ENCODE measurements at regions of chr10 and their contacts with region 1.

Region 1: DNA sequence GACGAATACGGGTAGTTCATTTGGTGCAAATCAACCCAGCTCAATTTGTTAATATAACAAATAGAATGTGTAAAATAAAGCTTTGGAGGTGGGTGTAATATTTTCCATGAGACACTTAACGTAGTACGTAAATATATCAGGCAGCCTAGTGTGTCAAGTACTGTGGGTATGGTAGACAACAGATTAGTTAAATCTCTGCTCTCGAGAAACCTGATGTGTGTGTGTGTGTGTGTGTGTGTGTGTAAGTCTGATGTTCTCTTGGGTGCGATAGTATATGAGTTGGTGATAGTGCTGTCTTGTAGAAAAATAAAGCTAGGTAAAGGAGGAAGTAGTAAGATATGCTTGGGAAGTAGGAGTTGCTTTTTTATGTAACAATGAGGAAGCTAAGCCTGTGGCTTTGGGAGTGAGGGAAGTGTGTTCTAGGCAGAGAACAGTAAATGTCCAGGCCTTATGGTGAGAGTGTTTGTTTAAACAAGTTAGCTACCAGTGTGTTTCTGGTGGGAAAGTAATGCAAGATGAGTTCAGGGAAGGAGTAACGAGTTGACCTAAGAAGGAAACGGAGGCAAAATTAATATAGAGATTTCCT is 26.1 kb downstream of the WAC start:
- DNase-seq: no peak
- H3K4me3 ChIP-seq: no peak overlapping the region
- H3K27ac ChIP-seq: no peak overlapping the region
- H3K4me1 ChIP-seq: peaks cover 0 to 18% (median 10%) of the 10 kb centered on the region in 4 experiments; a peak in 4 of 7 replicates
- H3K27me3 ChIP-seq: no peaks in the 10 kb centered on the region
- CTCF ChIP-seq: no peak
- EP300 ChIP-seq: no peak
- POLR2A ChIP-seq: no peak
- RAD21 ChIP-seq: no peak

Region 2: DNA sequence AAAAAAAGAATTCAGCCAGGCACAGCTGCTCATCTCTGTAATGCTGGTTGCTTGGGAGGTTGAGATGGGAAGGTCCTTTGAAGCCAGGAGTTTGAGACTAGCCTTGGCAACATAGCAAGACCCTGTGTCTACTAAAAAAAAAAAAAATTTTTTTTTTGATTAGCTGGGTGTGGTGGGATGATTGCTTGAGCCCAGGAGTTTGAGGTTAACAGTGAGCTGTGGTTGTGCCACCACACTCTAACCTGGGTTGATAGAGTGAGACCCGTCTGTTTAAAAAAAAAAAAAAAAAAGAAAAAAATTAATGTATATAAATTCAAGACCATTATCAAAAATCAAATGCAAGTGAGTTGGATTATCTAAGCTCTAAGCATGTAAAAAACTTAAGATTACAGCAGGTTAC is 20.4 kb before region 1 on chr10:
- CTCF ChIA-PET with region 1: no interaction called
- POLR2A ChIA-PET with region 1: interaction called, 39 read pairs
- DNase-seq: no peak
- H3K4me3 ChIP-seq: no peak overlapping the region
- H3K27ac ChIP-seq: no peak overlapping the region
- H3K4me1 ChIP-seq: no peaks in the 10 kb centered on the region; a peak in 1 of 7 replicates
- H3K27me3 ChIP-seq: no peaks in the 10 kb centered on the region
- CTCF ChIP-seq: no peak
- EP300 ChIP-seq: no peak
- POLR2A ChIP-seq: no peak
- RAD21 ChIP-seq: no peak

Region 3: GRCh38 chr10:28652696-28653095 is 93.7 kb after region 1 on chr10:
- CTCF ChIA-PET with region 1: no interaction called
- POLR2A ChIA-PET with region 1: no interaction called
- DNase-seq: no peak
- H3K4me3 ChIP-seq: no peak overlapping the region
- H3K27ac ChIP-seq: no peak overlapping the region
- H3K4me1 ChIP-seq: no peaks in the 10 kb centered on the region
- H3K27me3 ChIP-seq: no peaks in the 10 kb centered on the region
- CTCF ChIP-seq: no peak
- EP300 ChIP-seq: no peak
- POLR2A ChIP-seq: no peak
- RAD21 ChIP-seq: no peak

Measured in H1 (cell line).